ENCODE measurements at regions of chr16 and their contacts with region 1.

Region 1: DNA sequence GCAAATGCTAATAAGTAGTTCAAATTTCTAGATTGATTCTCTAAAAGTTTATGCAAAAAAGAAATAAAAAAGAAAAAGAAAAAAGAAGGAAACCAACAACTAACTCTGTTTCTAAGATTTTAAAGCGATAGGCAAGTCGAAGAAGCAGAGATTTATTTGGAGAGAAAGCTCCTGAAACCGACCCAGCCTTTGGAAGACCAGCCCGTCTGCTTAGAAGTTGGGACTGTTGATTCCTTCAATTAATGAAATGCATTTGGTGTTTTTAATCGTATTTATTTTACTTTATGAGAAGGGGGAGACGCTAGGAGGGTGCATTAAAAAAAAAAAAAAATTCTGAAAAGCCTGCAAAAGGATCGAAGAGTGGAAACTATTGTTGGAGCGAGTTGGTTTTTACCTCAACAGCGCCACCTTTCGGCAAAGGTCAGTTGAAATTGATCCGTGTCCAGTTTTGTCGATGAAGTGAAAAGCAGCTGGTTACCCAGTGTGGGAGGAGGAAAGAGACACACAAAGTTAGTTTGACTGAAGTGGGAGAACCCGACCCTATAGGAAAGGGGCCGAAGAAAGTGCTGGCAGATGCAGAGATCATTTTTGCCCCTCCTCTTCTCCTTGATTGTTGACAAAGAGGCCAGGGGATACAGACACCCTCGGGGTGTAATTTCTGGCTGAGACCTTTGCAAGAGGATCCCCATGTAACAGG is 1.5 kb upstream of the MAF start:
- DNase-seq: peak; percentile 75
- H3K4me3 Mint-ChIP-seq: peak overlapping the region; percentile 92
- H3K27ac Mint-ChIP-seq: peak overlapping the region; percentile 98
- H3K4me1 Mint-ChIP-seq: peaks cover 51% of the 10 kb centered on the region
- H3K27me3 Mint-ChIP-seq: peaks cover 9% of the 10 kb centered on the region

Region 2: GRCh38 chr16:78503602-78504001 is 1098.5 kb before region 1 on chr16:
- intact Hi-C with region 1: loop called (anchors 1 kb)
- DNase-seq: peak; percentile 9
- H3K4me3 Mint-ChIP-seq: no peak overlapping the region
- H3K27ac Mint-ChIP-seq: no peak overlapping the region
- H3K4me1 Mint-ChIP-seq: no peaks in the 10 kb centered on the region
- H3K27me3 Mint-ChIP-seq: no peaks in the 10 kb centered on the region

Region 3: DNA sequence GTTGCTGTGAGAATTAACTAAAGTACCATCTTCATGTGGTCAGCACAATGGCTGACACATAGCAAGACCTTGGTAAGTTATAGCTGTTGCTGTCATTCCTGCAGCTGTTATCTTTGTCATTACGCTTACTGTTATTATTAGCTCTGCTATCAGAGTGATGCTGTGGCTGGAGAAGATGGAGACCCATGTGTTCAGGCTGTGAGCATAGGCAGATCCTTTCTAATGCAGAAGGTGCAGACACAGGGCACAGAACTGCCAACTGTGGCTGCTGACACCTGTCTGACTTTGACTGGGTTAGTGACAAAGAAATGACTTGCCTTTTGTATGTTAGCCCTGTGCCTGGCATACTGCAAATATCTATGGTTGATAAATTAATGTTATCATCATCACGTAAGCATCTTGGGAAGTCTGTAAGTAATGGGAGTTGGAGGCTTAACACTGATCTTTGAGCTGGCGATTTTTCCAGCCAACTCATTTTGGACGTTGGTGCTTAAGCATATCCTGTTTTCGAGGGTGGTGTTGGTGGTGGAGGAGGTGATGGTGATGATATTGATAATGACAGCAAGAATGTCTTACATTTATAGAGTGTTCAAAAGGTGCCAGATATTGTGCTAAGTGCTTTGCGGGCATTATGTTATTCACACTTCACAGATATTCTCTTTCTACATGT is 807.4 kb before region 1 on chr16:
- intact Hi-C with region 1: loop called (anchors 1 kb)
- DNase-seq: no peak
- H3K4me3 Mint-ChIP-seq: no peak overlapping the region
- H3K27ac Mint-ChIP-seq: peak overlapping the region; percentile 77
- H3K4me1 Mint-ChIP-seq: peaks cover 35% of the 10 kb centered on the region
- H3K27me3 Mint-ChIP-seq: no peaks in the 10 kb centered on the region

Region 4: GRCh38 chr16:79217375-79218011 is 384.6 kb before region 1 on chr16:
- intact Hi-C with region 1: loop called (anchors 5 kb)
- DNase-seq: peak; percentile 19
- H3K4me3 Mint-ChIP-seq: no peak overlapping the region
- H3K27ac Mint-ChIP-seq: no peak overlapping the region
- H3K4me1 Mint-ChIP-seq: peaks cover 19% of the 10 kb centered on the region
- H3K27me3 Mint-ChIP-seq: no peaks in the 10 kb centered on the region

Region 5: GRCh38 chr16:79589601-79590102 is 12.4 kb before region 1 on chr16:
- intact Hi-C with region 1: no loop called
- DNase-seq: no peak
- H3K4me3 Mint-ChIP-seq: peak overlapping the region; percentile 17
- H3K27ac Mint-ChIP-seq: no peak overlapping the region
- H3K4me1 Mint-ChIP-seq: peaks cover 27% of the 10 kb centered on the region
- H3K27me3 Mint-ChIP-seq: peaks cover 41% of the 10 kb centered on the region

Region 6: GRCh38 chr16:79628501-79628975 is 26.5 kb after region 1 on chr16:
- intact Hi-C with region 1: loop called (anchors 1 kb)
- DNase-seq: peak; percentile 77
- H3K4me3 Mint-ChIP-seq: peak overlapping the region; percentile 68
- H3K27ac Mint-ChIP-seq: peak overlapping the region; percentile 93
- H3K4me1 Mint-ChIP-seq: peaks cover 77% of the 10 kb centered on the region
- H3K27me3 Mint-ChIP-seq: peaks cover 8% of the 10 kb centered on the region

Region 7: DNA sequence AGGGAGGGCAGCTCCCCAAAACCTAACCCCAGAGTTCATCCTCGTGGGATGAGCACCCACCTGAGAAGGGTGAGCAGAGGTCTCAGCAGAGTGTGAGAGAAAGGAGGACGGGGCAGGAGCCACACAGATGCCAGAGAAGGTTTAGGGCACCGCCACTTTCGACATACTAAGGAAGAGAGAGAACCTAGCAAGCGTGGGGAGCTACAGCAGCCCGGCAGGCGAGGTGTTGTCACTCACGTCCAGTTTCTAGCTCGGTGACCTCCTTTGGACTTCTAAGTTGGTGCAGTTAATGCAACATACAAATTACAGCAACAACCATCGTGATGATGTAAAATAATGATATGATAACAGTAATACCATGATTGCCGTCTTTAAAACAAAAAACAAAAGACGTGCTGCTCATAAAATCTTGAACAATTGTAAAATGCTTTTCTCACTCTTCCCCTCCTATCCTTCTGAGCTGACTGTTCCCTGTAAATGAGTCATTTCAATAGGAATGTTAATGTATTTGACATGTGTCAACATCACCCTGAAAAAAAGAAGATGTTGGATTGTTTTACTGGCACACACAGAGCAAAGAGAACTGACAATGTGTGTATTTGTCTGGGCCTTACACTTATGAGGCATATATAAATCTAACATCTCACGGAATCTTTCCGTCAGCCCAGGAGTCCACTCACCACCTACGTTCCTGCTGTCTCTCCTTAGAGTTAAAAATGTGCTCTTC is 156.7 kb after region 1 on chr16:
- intact Hi-C with region 1: loop called (anchors 2 kb)
- DNase-seq: no peak
- H3K4me3 Mint-ChIP-seq: no peak overlapping the region
- H3K27ac Mint-ChIP-seq: no peak overlapping the region
- H3K4me1 Mint-ChIP-seq: peaks cover 37% of the 10 kb centered on the region
- H3K27me3 Mint-ChIP-seq: peaks cover 2% of the 10 kb centered on the region

Region 8: DNA sequence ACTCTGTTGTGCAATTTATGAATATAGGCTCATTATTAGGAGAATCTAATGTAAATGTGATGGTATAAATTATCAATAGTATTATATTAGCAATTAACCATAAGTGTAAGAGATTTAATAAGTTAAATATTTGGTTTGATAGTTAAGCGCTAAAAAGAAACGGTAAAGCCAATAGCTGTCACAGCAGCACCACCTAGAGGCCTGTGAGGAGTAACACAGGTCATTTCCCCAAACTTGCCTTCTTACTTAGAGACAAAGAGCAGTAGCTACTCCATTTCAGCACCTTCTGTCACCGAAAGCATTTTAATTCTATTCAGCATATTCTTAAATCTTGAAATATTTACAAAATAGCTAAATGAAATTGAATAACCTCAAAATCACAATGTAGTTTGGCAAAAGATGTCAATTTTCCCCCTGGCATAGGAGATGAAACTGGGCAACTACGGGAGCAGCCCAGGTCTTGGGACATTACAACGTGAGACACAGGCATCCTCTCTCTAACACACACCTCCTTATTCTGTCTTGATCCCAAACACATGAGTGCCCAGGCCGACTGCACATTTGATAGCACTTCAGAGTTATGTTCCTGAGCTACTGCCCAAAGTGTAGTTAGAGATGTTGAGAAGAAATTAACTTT is 924.5 kb after region 1 on chr16:
- intact Hi-C with region 1: loop called (anchors 5 kb)
- DNase-seq: peak; percentile 35
- H3K4me3 Mint-ChIP-seq: no peak overlapping the region
- H3K27ac Mint-ChIP-seq: no peak overlapping the region
- H3K4me1 Mint-ChIP-seq: peaks cover 20% of the 10 kb centered on the region
- H3K27me3 Mint-ChIP-seq: no peaks in the 10 kb centered on the region